H1 (cell line): ENCODE measurements at regions of chr7 and their contacts with region 1.

Region 1: DNA sequence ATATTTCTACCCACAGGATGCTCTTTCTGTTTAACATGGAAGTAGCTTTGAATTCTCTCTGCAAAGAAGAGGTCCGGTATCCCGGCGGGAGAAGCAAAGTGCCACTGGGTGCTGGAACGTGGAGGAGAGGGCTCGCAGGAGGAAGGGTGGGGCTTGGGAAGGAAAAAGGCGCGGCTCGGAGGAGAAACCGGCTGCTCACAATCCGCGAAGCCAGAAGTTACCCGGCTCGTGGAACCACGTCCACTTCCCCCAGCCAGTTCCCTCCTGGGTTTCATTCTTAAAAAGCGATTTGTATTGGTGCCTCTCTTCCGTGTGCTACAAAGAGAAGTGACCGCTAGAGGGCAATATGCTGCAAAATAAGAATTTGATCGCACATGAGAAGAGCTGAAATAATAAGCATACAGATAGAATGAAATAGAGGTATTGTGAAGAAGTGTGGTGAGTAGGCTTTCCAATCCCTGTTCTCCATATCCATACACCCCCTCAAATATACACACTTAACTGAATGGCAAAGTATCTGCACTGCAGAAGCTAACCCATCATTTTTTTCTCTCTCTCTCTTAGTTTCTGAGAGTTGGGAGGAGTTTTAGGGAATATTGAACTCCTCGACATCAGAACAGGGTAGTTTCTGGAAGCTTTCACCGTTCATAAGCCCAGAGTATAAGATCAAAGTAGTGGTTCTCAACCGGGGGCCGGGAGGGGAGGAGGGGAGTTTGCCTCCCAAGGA is 31.1 kb downstream of the TRIL start:
- DNase-seq: peak in 1 of 2 experiments; percentile 66
- H3K4me3 ChIP-seq: peak overlapping the region; percentile 24 to 62 (median 40); a peak in 6 of 8 replicates
- H3K27ac ChIP-seq: no peak overlapping the region
- H3K4me1 ChIP-seq: peaks cover 0 to 8% (median 1%) of the 10 kb centered on the region in 4 experiments; a peak in 3 of 7 replicates
- H3K27me3 ChIP-seq: no peaks in the 10 kb centered on the region
- CTCF ChIP-seq: peak in 2 of 3 experiments; percentile 69 to 81; a peak in 3 of 4 replicates
- EP300 ChIP-seq: no peak
- POLR2A ChIP-seq: 0 out of 3 replicates have a peak, but pooled peaks of 1 of the 2 experiments have one; percentile 44
- RAD21 ChIP-seq: peak; percentile 74 to 79

Region 2: DNA sequence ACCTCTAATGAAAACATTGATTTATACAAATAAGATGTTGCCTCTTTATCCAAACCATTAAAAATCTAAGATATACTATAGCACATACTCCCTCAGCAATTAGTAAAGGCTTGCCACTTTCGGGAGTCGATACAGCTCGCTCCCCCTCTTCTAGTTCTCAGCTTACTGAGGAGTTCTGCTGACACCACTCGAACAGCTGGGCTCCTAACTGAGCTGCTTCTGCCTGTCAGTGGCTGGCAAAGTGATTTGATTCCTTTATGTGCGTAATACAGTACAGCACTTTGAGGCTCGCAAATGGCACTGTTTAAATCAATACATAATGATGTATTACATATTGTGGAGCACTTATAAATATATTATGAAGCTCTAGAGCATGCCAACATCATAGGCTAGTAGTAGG is 272.9 kb before region 1 on chr7:
- CTCF ChIA-PET with region 1: no interaction called
- POLR2A ChIA-PET with region 1: no interaction called
- DNase-seq: no peak
- H3K4me3 ChIP-seq: no peak overlapping the region
- H3K27ac ChIP-seq: no peak overlapping the region
- H3K4me1 ChIP-seq: no peaks in the 10 kb centered on the region
- H3K27me3 ChIP-seq: no peaks in the 10 kb centered on the region
- CTCF ChIP-seq: no peak
- EP300 ChIP-seq: no peak
- POLR2A ChIP-seq: no peak
- RAD21 ChIP-seq: no peak

Region 3: DNA sequence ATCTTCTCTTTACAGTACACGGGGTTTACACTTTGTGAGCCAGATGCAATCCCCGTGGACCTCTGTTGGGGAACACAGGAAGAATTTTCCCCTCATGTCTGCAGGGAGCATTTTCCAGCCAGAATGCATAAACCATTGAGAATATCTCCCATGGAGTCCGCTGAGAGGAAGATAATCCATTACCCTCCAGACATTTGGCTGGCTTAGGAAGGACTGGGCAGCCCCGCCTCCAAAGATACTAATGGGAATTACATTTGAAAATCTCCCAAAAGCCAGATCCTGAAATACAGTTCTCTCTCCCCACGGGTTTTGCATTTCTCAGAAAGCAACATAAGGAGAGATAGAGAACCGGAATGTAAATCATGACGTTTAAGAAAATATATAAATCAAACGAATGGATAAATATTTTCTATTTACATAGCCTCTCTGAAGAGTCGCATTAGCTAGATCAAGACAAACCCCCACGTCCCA is 22.4 kb before region 1 on chr7:
- CTCF ChIA-PET with region 1: interaction called, 97 read pairs
- POLR2A ChIA-PET with region 1: interaction called, 3 read pairs
- DNase-seq: no peak
- H3K4me3 ChIP-seq: no peak overlapping the region
- H3K27ac ChIP-seq: no peak overlapping the region
- H3K4me1 ChIP-seq: peaks cover 0 to 16% (median 3%) of the 10 kb centered on the region in 4 experiments; a peak in 2 of 7 replicates
- H3K27me3 ChIP-seq: no peaks in the 10 kb centered on the region
- CTCF ChIP-seq: no peak
- EP300 ChIP-seq: no peak
- POLR2A ChIP-seq: no peak
- RAD21 ChIP-seq: no peak

Region 4: GRCh38 chr7:28984631-28985030 is 57.6 kb after region 1 on chr7:
- CTCF ChIA-PET with region 1: interaction called, 19 read pairs
- POLR2A ChIA-PET with region 1: no interaction called
- DNase-seq: no peak
- H3K4me3 ChIP-seq: peak overlapping the region in 1 of 4 experiments; percentile 23; a peak in 1 of 8 replicates
- H3K27ac ChIP-seq: peak overlapping the region; percentile 32; the same call in 1 of the 2 replicates
- H3K4me1 ChIP-seq: peaks cover 5 to 12% (median 10%) of the 10 kb centered on the region in 4 experiments
- H3K27me3 ChIP-seq: no peaks in the 10 kb centered on the region
- CTCF ChIP-seq: peak in 2 of 3 experiments; percentile 12 to 20; a peak in 2 of 4 replicates
- EP300 ChIP-seq: no peak
- POLR2A ChIP-seq: no peak
- RAD21 ChIP-seq: no peak; a peak in 1 of 4 replicates

Region 5: DNA sequence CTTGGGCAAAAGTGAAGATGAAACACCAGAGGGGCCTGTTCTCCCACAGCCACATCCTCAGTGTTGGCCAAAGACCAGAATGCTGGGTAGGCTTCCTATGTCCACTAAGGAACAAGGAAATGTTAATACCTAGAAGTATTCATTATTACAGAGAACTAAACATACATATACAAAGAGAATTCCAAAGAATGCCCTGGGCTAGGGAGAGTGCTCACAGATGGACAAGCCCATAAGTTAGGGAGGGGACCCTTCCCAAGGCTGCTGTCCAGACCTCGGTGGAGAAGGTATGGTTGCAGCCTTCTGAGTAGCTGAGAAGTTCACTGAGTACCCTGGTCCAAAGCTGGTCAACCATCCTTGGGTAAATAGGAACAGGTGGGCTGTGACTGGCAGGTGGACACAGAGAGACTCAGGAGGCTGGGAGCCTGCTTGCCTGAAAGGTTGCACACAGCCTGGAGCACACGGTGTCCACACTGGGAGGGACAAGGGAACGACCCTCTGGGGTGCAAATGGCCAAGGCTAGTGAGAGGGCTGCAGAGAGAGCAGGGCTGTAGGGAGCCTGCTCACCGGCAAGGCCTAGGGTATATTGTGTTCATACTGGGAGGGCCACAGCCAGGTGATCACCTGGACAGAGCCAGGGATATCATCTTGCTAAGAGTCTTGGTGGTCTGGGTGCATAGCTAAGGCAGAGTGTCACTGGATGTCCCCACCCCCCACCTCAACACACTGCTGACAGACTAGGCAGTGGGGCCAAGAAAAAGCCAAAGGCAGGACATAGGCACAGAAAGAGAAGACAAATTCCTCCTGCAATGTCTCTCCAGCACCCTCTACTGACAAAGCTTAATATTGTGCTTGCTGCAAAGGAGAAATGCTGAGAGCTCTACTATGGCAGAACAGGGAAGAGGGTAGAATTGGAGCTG is 179.0 kb after region 1 on chr7:
- CTCF ChIA-PET with region 1: interaction called, 692 read pairs
- POLR2A ChIA-PET with region 1: no interaction called
- DNase-seq: peak in 1 of 2 experiments; percentile 21
- H3K4me3 ChIP-seq: no peak overlapping the region
- H3K27ac ChIP-seq: no peak overlapping the region
- H3K4me1 ChIP-seq: no peaks in the 10 kb centered on the region
- H3K27me3 ChIP-seq: no peaks in the 10 kb centered on the region
- CTCF ChIP-seq: peak in 2 of 3 experiments; percentile 89 to 90; a peak in 3 of 4 replicates
- EP300 ChIP-seq: no peak
- POLR2A ChIP-seq: no peak
- RAD21 ChIP-seq: peak; percentile 94 to 95